Activated CD8-positive, alpha-beta T cell treated with anti-CD3 and anti-CD28 coated beads for 36 hours (primary cell): ENCODE measurements at regions of chr18 and their contacts with region 1.

Region 1: GRCh38 chr18:46281185-46282176 is 177.3 kb downstream of the HAUS1 start:
- DNase-seq: peak; percentile 79
- ATAC-seq: peak; percentile 96
- H3K4me3 Mint-ChIP-seq: no peak overlapping the region
- H3K27ac Mint-ChIP-seq: no peak overlapping the region
- H3K4me1 Mint-ChIP-seq: peaks cover 4% of the 10 kb centered on the region
- H3K27me3 Mint-ChIP-seq: no peaks in the 10 kb centered on the region
- CTCF ChIP-seq: peak; percentile 96

Region 2: GRCh38 chr18:46148810-46149209 is 132.7 kb before region 1 on chr18:
- CTCF ChIA-PET with region 1: interaction called, 28 read pairs
- POLR2A ChIA-PET with region 1: no interaction called
- intact Hi-C with region 1: no loop called
- DNase-seq: peak; percentile 73
- ATAC-seq: peak; percentile 63
- H3K4me3 Mint-ChIP-seq: no peak overlapping the region
- H3K27ac Mint-ChIP-seq: peak overlapping the region; percentile 65
- H3K4me1 Mint-ChIP-seq: peaks cover 30% of the 10 kb centered on the region
- H3K27me3 Mint-ChIP-seq: no peaks in the 10 kb centered on the region
- CTCF ChIP-seq: peak; percentile 76

Region 3: GRCh38 chr18:46264235-46264893 is 17.1 kb before region 1 on chr18:
- CTCF ChIA-PET with region 1: interaction called, 12 read pairs
- POLR2A ChIA-PET with region 1: no interaction called
- intact Hi-C with region 1: no loop called
- DNase-seq: no peak
- ATAC-seq: peak; percentile 32
- H3K4me3 Mint-ChIP-seq: no peak overlapping the region
- H3K27ac Mint-ChIP-seq: peak overlapping the region; percentile 83
- H3K4me1 Mint-ChIP-seq: peaks cover 70% of the 10 kb centered on the region
- H3K27me3 Mint-ChIP-seq: no peaks in the 10 kb centered on the region
- CTCF ChIP-seq: no peak

Region 4: DNA sequence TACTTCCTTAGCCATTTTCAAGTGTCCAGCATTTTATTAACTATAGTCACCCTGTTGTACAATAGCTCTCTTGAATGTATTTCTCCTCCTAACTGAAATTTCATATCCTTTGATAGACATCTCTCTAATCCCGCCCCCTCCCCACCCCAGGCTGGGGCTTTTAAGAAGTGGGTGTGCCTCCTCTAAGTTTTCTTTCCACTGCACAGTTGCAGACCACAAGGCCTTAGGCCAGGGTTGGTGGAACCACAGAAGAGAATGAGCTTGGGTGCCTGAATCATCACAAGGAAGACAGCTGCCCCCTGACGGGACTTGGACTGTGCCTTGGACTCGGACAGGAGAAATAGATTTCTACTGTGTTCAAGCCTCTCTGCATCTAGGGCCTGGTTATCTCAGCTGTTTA is 16.1 kb after region 1 on chr18:
- CTCF ChIA-PET with region 1: interaction called, 11 read pairs
- POLR2A ChIA-PET with region 1: no interaction called
- intact Hi-C with region 1: no loop called
- DNase-seq: peak; percentile 68
- ATAC-seq: peak; percentile 89
- H3K4me3 Mint-ChIP-seq: no peak overlapping the region
- H3K27ac Mint-ChIP-seq: no peak overlapping the region
- H3K4me1 Mint-ChIP-seq: peaks cover 6% of the 10 kb centered on the region
- H3K27me3 Mint-ChIP-seq: peaks cover 3% of the 10 kb centered on the region
- CTCF ChIP-seq: no peak

Region 5: GRCh38 chr18:46360866-46361265 is 79.4 kb after region 1 on chr18:
- CTCF ChIA-PET with region 1: interaction called, 14 read pairs
- POLR2A ChIA-PET with region 1: no interaction called
- intact Hi-C with region 1: no loop called
- DNase-seq: no peak
- ATAC-seq: no peak
- H3K4me3 Mint-ChIP-seq: no peak overlapping the region
- H3K27ac Mint-ChIP-seq: no peak overlapping the region
- H3K4me1 Mint-ChIP-seq: no peaks in the 10 kb centered on the region
- H3K27me3 Mint-ChIP-seq: no peaks in the 10 kb centered on the region
- CTCF ChIP-seq: no peak

Region 6: DNA sequence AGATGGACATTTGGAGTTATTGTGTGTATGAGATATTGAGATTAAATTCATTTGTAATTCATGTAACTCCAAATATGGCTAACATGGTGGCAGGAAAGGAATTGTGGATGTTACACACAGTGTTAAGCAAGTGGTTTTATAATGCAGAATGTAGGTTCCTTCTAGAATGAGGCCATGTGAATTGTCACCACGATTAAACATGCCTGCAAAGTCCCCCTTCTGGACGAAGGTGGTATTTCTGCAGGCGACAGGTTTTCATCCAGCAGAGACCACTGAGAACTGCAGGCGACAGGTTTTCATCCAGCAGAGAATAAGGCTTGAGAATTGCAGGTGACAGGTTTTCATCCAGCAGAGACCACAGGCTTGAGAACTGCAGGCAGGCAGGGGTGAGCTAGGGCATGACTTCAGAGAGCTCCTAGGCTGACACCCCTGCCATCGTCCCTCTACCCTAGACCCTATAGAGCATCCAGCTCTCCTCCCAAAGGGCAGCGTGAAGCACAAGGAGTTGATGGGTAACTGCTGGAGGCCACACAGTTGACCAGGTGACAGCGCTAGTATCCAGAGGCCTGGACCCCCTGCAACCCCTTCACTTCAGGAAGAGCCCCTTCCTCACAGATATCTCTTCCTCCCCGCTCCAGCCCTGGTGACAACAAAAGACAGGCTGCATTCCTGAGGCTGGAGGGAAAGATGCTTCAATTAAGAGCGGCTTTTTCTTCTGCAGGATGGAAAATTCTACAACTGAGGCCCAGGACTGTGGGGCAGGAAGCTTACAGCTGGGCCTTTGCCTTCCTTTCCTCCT is 199.8 kb after region 1 on chr18:
- CTCF ChIA-PET with region 1: interaction called, 24 read pairs
- POLR2A ChIA-PET with region 1: no interaction called
- intact Hi-C with region 1: loop called (anchors 5 kb)
- DNase-seq: peak; percentile 79
- ATAC-seq: peak; percentile 78
- H3K4me3 Mint-ChIP-seq: no peak overlapping the region
- H3K27ac Mint-ChIP-seq: no peak overlapping the region
- H3K4me1 Mint-ChIP-seq: no peaks in the 10 kb centered on the region
- H3K27me3 Mint-ChIP-seq: peaks cover 3% of the 10 kb centered on the region
- CTCF ChIP-seq: peak; percentile 83